OCI-LY7 (cell line): ENCODE measurements at regions of chr6 and their contacts with region 1.

Region 1: GRCh38 chr6:19538077-19538512 is 299.1 kb upstream of the ID4 start:
- DNase-seq: no peak
- H3K4me3 ChIP-seq: no peak overlapping the region
- H3K27ac ChIP-seq: no peak overlapping the region
- H3K4me1 ChIP-seq: no peaks in the 10 kb centered on the region
- CTCF ChIP-seq: no peak

Region 2: DNA sequence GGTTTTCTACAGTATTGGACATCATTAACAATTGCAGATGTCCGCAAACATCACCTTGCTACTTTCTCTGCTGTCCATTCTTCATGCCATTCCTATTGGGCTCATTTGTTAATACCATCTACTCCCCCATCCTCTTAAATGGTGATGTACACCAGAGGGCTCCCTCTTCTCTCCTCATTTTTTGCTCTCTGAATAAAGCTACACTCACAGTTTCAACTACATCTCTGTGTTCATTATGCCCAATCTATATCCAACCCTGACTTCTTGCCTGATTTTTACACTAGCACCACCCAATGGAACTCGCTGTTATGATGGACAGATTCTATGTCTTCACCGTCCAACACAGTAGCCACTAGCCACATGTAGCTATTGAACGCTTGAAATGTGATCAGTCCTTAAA is 11.0 kb after region 1 on chr6:
- CTCF ChIA-PET with region 1: no interaction called
- POLR2A ChIA-PET with region 1: interaction called, 18 read pairs
- intact Hi-C with region 1: no loop called
- DNase-seq: peak; percentile 45
- H3K4me3 ChIP-seq: no peak overlapping the region
- H3K27ac ChIP-seq: no peak overlapping the region
- H3K4me1 ChIP-seq: peaks cover 18% of the 10 kb centered on the region
- CTCF ChIP-seq: peak; percentile 68